ENCODE measurements at regions of chr5 and their contacts with region 1.

Region 1: DNA sequence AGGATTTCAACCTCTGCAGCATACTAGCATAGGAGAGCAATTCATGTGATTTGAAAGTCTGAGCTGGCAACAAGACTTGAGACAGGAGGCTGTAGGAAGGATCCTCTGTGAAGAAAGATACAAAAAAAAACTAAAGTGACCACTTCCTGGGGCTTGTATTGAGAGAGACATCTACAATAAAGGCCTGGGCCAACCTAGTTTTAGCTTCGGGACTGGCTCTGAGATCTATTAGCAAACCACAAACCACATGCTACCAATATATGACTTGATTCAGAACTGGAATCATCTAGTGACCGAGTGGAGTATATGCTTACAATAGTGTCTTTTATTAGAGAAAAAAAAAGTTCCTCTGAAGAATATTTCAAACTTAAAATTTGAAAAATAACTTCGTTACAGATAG is 1448.9 kb upstream of the CDH6 start:
- DNase-seq: no peak
- ATAC-seq: no peak
- H3K4me3 ChIP-seq: no peak overlapping the region
- H3K27ac ChIP-seq: no peak overlapping the region
- H3K4me1 ChIP-seq: no peaks in the 10 kb centered on the region
- H3K27me3 ChIP-seq: no peaks in the 10 kb centered on the region
- CTCF ChIP-seq: no peak
- POLR2A ChIP-seq: no peak
- RAD21 ChIP-seq: no peak

Region 2: DNA sequence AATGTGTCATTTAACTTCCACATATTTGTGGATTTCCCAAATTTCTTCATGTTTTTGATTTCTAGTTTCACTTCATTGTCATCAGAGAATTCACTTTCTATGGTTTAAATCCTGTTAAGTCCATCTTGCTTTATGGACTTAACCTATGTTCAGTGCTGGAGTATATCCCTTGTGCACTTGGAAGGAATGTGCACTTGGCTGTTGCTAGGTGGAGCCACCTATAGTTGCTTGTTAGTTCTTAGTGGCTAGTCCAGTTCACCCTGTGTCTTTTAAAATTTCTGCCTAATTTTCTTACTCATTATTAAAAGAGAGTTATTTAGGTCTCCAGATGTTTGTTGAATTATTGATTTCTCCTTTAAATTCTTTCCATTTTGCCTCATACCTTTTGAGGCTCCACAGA is 23.7 kb before region 1 on chr5:
- CTCF ChIA-PET with region 1: no interaction called
- POLR2A ChIA-PET with region 1: no interaction called
- dilution Hi-C with region 1: no loop called
- in situ Hi-C with region 1: no loop called
- intact Hi-C with region 1: no loop called
- DNase-seq: no peak
- ATAC-seq: no peak
- H3K4me3 ChIP-seq: no peak overlapping the region
- H3K27ac ChIP-seq: no peak overlapping the region
- H3K4me1 ChIP-seq: no peaks in the 10 kb centered on the region
- H3K27me3 ChIP-seq: no peaks in the 10 kb centered on the region
- CTCF ChIP-seq: no peak
- POLR2A ChIP-seq: no peak
- RAD21 ChIP-seq: no peak

Region 3: GRCh38 chr5:29796013-29796412 is 51.4 kb after region 1 on chr5:
- CTCF ChIA-PET with region 1: no interaction called
- POLR2A ChIA-PET with region 1: no interaction called
- dilution Hi-C with region 1: no loop called
- in situ Hi-C with region 1: no loop called
- intact Hi-C with region 1: loop called (anchors 1 kb)
- DNase-seq: no peak
- ATAC-seq: no peak
- H3K4me3 ChIP-seq: no peak overlapping the region
- H3K27ac ChIP-seq: no peak overlapping the region
- H3K4me1 ChIP-seq: no peaks in the 10 kb centered on the region
- H3K27me3 ChIP-seq: no peaks in the 10 kb centered on the region
- CTCF ChIP-seq: no peak
- POLR2A ChIP-seq: no peak
- RAD21 ChIP-seq: no peak

Region 4: GRCh38 chr5:30069441-30070263 is 325.0 kb after region 1 on chr5:
- CTCF ChIA-PET with region 1: no interaction called
- POLR2A ChIA-PET with region 1: no interaction called
- dilution Hi-C with region 1: no loop called
- in situ Hi-C with region 1: no loop called
- intact Hi-C with region 1: no loop called
- DNase-seq: no peak
- ATAC-seq: no peak
- H3K4me3 ChIP-seq: no peak overlapping the region
- H3K27ac ChIP-seq: no peak overlapping the region
- H3K4me1 ChIP-seq: no peaks in the 10 kb centered on the region
- H3K27me3 ChIP-seq: no peaks in the 10 kb centered on the region
- CTCF ChIP-seq: no peak
- POLR2A ChIP-seq: no peak
- RAD21 ChIP-seq: no peak